PC-3 (cell line): ENCODE measurements at regions of chr4 and their contacts with region 1.

Region 1: GRCh38 chr4:27000820-27001219 is 140.2 kb downstream of the STIM2 start:
- DNase-seq: peak; percentile 32
- ATAC-seq: peak; percentile 58
- H3K4me3 ChIP-seq: no peak overlapping the region
- H3K27ac ChIP-seq: no peak overlapping the region
- H3K4me1 ChIP-seq: peaks cover 30% of the 10 kb centered on the region
- H3K27me3 ChIP-seq: no peaks in the 10 kb centered on the region
- CTCF ChIP-seq: peak; percentile 46

Region 2: GRCh38 chr4:25667931-25668557 is 1332.8 kb before region 1 on chr4:
- CTCF ChIA-PET with region 1: no interaction called
- POLR2A ChIA-PET with region 1: no interaction called
- intact Hi-C with region 1: no loop called
- DNase-seq: peak; percentile 67
- ATAC-seq: peak; percentile 68
- H3K4me3 ChIP-seq: no peak overlapping the region
- H3K27ac ChIP-seq: no peak overlapping the region
- H3K4me1 ChIP-seq: no peaks in the 10 kb centered on the region
- H3K27me3 ChIP-seq: no peaks in the 10 kb centered on the region
- CTCF ChIP-seq: peak; percentile 50

Region 3: DNA sequence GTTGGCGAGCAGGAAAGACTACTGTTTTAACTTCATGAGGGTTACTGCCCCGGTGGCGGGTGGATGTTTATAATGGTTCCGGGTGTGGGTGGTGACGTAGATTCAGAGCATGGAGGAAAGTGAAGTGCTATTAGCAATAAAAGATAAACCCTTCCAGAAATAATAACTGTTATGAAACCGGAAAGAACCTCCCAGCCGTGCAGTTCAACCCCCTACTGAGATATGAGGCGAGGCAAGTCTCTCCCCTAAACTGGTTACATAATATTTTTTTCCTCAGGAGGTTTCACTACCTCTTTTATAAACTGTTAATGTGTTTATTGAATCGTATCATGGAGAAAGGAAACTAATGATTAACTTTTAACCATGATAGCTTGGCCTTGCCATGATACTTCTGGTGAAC is 174.1 kb before region 1 on chr4:
- CTCF ChIA-PET with region 1: no interaction called
- POLR2A ChIA-PET with region 1: no interaction called
- intact Hi-C with region 1: no loop called
- DNase-seq: no peak
- ATAC-seq: no peak
- H3K4me3 ChIP-seq: no peak overlapping the region
- H3K27ac ChIP-seq: no peak overlapping the region
- H3K4me1 ChIP-seq: no peaks in the 10 kb centered on the region
- H3K27me3 ChIP-seq: no peaks in the 10 kb centered on the region
- CTCF ChIP-seq: no peak

Region 4: DNA sequence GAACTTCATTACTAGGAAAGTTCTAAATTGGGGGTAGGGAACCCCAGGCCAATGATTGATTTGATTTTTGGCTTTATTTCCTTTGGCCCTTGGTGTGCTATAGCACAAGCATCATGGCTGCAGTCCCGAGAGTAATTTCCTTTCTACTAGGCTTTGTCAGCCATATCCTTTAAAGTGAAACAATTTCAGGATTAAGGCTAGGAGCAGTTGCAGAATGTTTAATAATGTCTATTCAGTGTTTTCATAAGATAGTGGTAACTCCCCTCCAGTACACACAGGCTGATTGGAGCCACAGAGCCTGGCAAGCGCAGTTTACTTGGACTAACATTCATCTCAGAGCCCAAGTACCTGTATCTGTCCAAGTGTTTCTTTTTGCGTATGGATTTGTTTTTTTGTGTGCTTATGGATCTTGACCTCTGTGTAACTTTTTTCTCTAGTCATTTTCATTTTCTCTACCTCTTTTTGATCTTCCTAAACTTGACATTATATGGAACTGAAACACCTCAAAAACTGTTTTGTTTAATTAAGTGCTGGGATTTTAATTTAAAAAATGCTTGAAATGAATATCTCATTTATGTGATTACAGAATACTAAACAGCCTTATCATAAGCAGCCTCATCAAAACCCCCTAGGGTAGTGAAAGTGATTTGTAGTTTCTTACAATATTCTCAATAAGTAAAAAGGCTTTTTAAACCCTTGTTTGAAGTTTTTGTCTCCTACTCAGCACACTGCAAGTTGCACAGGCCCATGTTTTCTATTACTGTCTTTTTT is 132.7 kb before region 1 on chr4:
- CTCF ChIA-PET with region 1: no interaction called
- POLR2A ChIA-PET with region 1: no interaction called
- intact Hi-C with region 1: no loop called
- DNase-seq: no peak
- ATAC-seq: no peak
- H3K4me3 ChIP-seq: no peak overlapping the region
- H3K27ac ChIP-seq: no peak overlapping the region
- H3K4me1 ChIP-seq: peaks cover 6% of the 10 kb centered on the region
- H3K27me3 ChIP-seq: no peaks in the 10 kb centered on the region
- CTCF ChIP-seq: no peak

Region 5: GRCh38 chr4:26878794-26879391 is 121.9 kb before region 1 on chr4:
- CTCF ChIA-PET with region 1: no interaction called
- POLR2A ChIA-PET with region 1: interaction called, 4 read pairs
- intact Hi-C with region 1: loop called (anchors 5 kb)
- DNase-seq: peak; percentile 51
- ATAC-seq: peak; percentile 51
- H3K4me3 ChIP-seq: no peak overlapping the region
- H3K27ac ChIP-seq: peak overlapping the region; percentile 37
- H3K4me1 ChIP-seq: peaks cover 10% of the 10 kb centered on the region
- H3K27me3 ChIP-seq: no peaks in the 10 kb centered on the region
- CTCF ChIP-seq: no peak

Region 6: DNA sequence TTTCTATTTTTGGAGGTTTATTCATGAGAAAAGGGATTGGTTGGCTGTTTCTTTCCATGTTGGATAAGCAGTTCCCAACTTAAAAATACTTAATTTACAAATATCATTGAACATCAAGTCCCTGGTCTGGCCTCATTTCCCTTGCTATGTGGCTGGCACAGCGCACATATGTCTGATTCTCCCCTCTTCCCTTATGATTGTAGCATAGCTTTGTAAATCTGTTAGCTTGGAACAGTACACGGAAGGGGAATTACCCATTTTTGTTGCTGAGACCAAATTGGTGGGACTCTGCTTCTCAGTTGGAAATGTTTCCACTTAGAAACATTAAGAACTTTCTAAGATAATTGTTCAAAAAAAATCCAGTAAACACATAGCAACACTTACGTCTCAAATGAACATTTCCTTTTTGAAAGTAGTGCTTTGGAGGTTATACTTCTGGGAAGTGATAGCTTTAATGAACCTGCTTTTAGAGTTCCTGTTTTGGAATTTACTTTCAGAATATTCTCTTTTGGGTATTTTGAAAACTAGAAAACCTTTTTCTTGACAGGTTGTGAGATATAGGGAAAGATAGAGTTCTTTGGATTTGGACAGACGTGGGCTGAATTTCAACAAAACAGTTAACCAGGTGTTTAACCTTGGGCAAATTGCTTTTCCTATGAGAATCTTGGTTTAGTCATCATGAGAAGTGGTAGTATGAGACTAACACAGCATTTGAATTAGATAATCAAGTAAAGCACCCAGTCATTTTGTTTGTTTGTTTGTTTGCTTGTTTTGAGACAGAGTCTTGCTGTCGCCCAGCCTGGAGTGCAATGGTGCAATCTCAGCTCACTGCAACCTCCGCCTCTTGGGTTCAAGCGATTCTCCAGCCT is 92.9 kb before region 1 on chr4:
- CTCF ChIA-PET with region 1: no interaction called
- POLR2A ChIA-PET with region 1: no interaction called
- intact Hi-C with region 1: loop called (anchors 5 kb)
- DNase-seq: no peak
- ATAC-seq: no peak
- H3K4me3 ChIP-seq: no peak overlapping the region
- H3K27ac ChIP-seq: no peak overlapping the region
- H3K4me1 ChIP-seq: no peaks in the 10 kb centered on the region
- H3K27me3 ChIP-seq: no peaks in the 10 kb centered on the region
- CTCF ChIP-seq: no peak

Region 7: GRCh38 chr4:26964512-26964911 is 36.3 kb before region 1 on chr4:
- CTCF ChIA-PET with region 1: no interaction called
- POLR2A ChIA-PET with region 1: no interaction called
- intact Hi-C with region 1: loop called (anchors 5 kb)
- DNase-seq: peak; percentile 28
- ATAC-seq: peak; percentile 82
- H3K4me3 ChIP-seq: no peak overlapping the region
- H3K27ac ChIP-seq: no peak overlapping the region
- H3K4me1 ChIP-seq: peaks cover 13% of the 10 kb centered on the region
- H3K27me3 ChIP-seq: no peaks in the 10 kb centered on the region
- CTCF ChIP-seq: no peak